ENCODE measurements at regions of chr11 and their contacts with region 1.

Region 1: GRCh38 chr11:80613655-80614054 is 1172.8 kb upstream of the TENM4 start:
- DNase-seq: no peak
- ATAC-seq: no peak
- H3K4me3 ChIP-seq: no peak overlapping the region
- H3K27ac ChIP-seq: no peak overlapping the region
- H3K4me1 ChIP-seq: no peaks in the 10 kb centered on the region
- H3K27me3 ChIP-seq: no peaks in the 10 kb centered on the region
- CTCF ChIP-seq: no peak
- POLR2A ChIP-seq: no peak

Region 2: GRCh38 chr11:80603472-80603871 is 10.2 kb before region 1 on chr11:
- in situ Hi-C with region 1: no loop called
- intact Hi-C with region 1: loop called (anchors 1 kb)
- DNase-seq: no peak
- ATAC-seq: no peak
- H3K4me3 ChIP-seq: no peak overlapping the region
- H3K27ac ChIP-seq: no peak overlapping the region
- H3K4me1 ChIP-seq: no peaks in the 10 kb centered on the region
- H3K27me3 ChIP-seq: no peaks in the 10 kb centered on the region
- CTCF ChIP-seq: no peak
- POLR2A ChIP-seq: no peak

Region 3: DNA sequence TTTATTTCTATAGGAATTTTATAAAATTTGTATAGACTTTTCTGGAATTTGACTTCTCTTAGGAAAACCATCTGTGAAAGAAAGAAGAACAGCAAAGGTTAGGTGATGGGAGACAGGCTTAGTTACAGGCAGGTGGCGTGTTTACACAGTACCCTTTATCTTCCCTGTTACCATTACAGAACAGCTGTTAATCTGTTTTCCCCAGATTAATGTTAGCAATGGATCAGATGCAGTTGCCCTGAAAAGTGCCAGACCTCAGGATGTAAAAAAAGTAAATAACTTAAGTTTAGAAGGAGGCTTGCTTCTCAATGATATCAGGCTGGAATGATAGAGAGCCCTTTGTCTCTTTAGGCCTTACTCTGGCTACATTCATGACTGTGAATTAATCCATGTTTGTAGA is 13.7 kb after region 1 on chr11:
- in situ Hi-C with region 1: no loop called
- intact Hi-C with region 1: no loop called
- DNase-seq: no peak
- ATAC-seq: no peak
- H3K4me3 ChIP-seq: no peak overlapping the region
- H3K27ac ChIP-seq: no peak overlapping the region
- H3K4me1 ChIP-seq: no peaks in the 10 kb centered on the region
- H3K27me3 ChIP-seq: no peaks in the 10 kb centered on the region
- CTCF ChIP-seq: no peak
- POLR2A ChIP-seq: no peak

Region 4: DNA sequence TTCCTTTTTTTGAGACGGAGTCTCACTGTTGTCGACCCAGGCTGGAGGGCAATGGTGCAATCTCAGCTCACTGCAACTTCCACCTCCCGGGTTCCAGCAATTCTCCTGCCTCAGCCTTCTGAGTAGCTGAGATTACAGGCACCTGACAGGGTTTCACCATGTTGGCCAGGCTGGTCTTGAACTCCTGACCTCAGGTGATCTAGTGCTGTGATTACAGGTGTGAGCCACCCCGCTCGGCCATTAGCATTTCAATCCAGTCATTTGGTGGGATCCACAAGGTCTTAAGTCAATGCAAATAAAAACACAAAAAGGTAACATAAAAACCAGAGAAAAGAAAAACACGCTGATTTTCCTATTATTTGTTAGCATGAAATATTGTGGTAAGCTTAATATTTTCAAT is 54.4 kb after region 1 on chr11:
- in situ Hi-C with region 1: no loop called
- intact Hi-C with region 1: no loop called
- DNase-seq: no peak
- ATAC-seq: no peak
- H3K4me3 ChIP-seq: no peak overlapping the region
- H3K27ac ChIP-seq: no peak overlapping the region
- H3K4me1 ChIP-seq: no peaks in the 10 kb centered on the region
- H3K27me3 ChIP-seq: no peaks in the 10 kb centered on the region
- CTCF ChIP-seq: no peak
- POLR2A ChIP-seq: no peak

Region 5: DNA sequence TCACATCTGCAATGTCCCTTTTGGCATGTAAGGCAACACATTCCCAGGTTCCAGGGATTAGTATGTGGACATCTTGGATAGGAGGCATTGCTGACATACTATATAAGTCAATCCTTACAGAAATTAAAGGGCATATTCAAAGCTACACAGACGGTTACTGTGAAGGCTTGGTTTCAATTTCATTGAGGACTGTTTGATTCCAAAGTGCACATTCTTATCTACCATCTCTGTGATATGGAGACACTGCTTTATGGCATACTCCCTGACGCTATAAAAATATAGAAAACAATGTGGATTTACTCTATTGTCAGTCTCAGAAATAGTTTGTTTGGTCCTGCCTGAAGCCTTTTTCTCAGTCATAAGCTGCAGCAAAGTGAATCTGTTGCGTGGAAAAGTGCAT is 633.3 kb after region 1 on chr11:
- in situ Hi-C with region 1: no loop called
- intact Hi-C with region 1: no loop called
- DNase-seq: no peak
- ATAC-seq: no peak
- H3K4me3 ChIP-seq: no peak overlapping the region
- H3K27ac ChIP-seq: no peak overlapping the region
- H3K4me1 ChIP-seq: no peaks in the 10 kb centered on the region
- H3K27me3 ChIP-seq: no peaks in the 10 kb centered on the region
- CTCF ChIP-seq: no peak
- POLR2A ChIP-seq: no peak

Measured in gastrocnemius medialis (tissue), 4 donors.